Panc1 (cell line): ENCODE measurements at regions of chr11 and their contacts with region 1.

Region 1: GRCh38 chr11:22169833-22170232 is 23.1 kb upstream of the ANO5 start:
- DNase-seq: no peak
- ATAC-seq: no peak
- H3K4me3 ChIP-seq: no peak overlapping the region
- H3K27ac ChIP-seq: no peak overlapping the region
- H3K4me1 ChIP-seq: no peaks in the 10 kb centered on the region
- H3K27me3 ChIP-seq: no peaks in the 10 kb centered on the region; the same call in 1 of the 2 replicates
- CTCF ChIP-seq: no peak; the same call in 1 of the 2 replicates

Region 2: DNA sequence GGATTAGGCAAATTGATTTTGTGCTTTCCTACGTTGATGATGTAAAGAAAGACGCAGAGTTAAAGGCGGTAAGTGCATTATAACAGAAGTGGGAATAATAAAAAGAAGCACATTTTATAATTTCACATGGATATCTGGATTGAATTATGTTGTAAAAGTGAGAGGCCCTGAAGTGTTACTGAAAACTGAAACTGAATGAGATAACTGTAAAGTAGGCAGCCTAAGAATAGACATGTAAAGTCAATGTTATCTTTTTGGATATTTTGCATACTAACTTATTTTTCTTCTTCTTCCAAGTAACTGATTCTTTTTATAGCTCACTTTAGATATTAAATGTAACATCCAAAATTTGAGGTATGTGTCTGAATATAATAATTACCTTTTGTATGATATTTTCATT is 51.3 kb after region 1 on chr11:
- CTCF ChIA-PET with region 1: no interaction called
- POLR2A ChIA-PET with region 1: no interaction called
- in situ Hi-C with region 1: no loop called
- intact Hi-C with region 1: no loop called
- DNase-seq: no peak
- ATAC-seq: no peak
- H3K4me3 ChIP-seq: no peak overlapping the region
- H3K27ac ChIP-seq: no peak overlapping the region
- H3K4me1 ChIP-seq: no peaks in the 10 kb centered on the region
- H3K27me3 ChIP-seq: no peaks in the 10 kb centered on the region
- CTCF ChIP-seq: no peak

Region 3: DNA sequence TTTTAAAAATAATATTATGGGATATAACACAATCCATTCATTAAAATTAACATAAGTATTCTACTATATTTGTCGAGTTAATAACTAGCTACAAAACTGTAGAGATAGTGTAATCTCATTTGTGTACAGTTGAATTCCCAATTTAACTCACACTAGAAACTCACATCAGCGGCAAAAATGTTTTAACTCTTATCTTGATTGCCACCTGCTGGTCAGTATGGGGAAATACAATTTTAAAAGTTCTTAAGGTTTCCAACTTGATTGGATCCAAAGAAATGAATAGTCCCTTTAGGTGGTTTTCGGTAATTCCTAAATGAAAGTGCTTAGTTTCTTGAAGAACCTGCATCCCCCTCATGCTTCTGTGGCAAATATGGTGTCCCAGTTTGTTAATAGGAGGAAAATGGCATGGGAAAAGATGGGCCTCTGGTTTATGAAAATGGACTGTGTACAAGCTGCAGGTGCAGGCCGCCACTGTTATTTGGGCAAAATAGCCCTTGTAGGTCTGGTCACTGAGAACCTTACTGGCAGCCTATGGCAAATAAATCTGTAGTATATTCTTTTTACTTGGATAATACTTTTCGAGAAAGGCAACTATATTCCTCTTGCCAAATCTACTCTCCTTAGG is 134.6 kb after region 1 on chr11:
- CTCF ChIA-PET with region 1: no interaction called
- POLR2A ChIA-PET with region 1: no interaction called
- in situ Hi-C with region 1: no loop called
- intact Hi-C with region 1: loop called (anchors 2 kb)
- DNase-seq: peak; percentile 7
- ATAC-seq: no peak
- H3K4me3 ChIP-seq: no peak overlapping the region
- H3K27ac ChIP-seq: no peak overlapping the region
- H3K4me1 ChIP-seq: no peaks in the 10 kb centered on the region
- H3K27me3 ChIP-seq: 0 out of 2 replicates have a peak, but pooled peaks cover 2% of the 10 kb centered on the region
- CTCF ChIP-seq: peak; percentile 68

Region 4: GRCh38 chr11:22318673-22319072 is 148.8 kb after region 1 on chr11:
- CTCF ChIA-PET with region 1: no interaction called
- POLR2A ChIA-PET with region 1: no interaction called
- in situ Hi-C with region 1: no loop called
- intact Hi-C with region 1: no loop called
- DNase-seq: no peak
- ATAC-seq: no peak
- H3K4me3 ChIP-seq: no peak overlapping the region
- H3K27ac ChIP-seq: no peak overlapping the region
- H3K4me1 ChIP-seq: no peaks in the 10 kb centered on the region
- H3K27me3 ChIP-seq: no peaks in the 10 kb centered on the region
- CTCF ChIP-seq: no peak